SK-N-SH (cell line): ENCODE measurements at regions of chr10 and their contacts with region 1.

Region 1: DNA sequence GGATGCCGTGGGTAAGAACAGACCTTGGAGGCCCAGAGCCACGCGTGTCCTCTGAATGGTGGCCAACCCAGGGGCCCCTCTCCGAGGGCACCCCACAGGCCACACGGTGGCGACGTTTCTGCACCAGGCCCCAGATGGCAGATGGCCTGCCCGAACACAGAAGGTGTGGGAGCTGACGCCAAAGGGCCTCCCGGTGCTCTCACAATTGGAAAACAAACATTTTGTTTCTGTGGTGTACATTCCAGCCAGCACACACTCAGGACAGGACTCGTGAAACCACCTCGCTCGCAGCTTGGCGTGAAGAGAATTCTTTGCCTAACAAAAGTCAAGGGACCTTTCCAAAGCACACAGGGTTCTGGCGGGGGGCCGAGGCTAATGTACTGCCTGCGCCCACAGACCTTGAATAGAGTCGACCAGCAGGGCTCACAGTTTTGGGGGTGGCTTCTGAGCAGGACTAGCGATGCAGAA is 112.1 kb downstream of the FAM53B start:
- DNase-seq: peak; percentile 58
- H3K4me3 ChIP-seq: no peak overlapping the region
- H3K27ac ChIP-seq: no peak overlapping the region; a peak in 1 of 4 replicates
- H3K4me1 ChIP-seq: peaks cover 0 to 21% of the 10 kb centered on the region in 2 experiments; a peak in 1 of 4 replicates
- H3K27me3 ChIP-seq: no peaks in the 10 kb centered on the region
- CTCF ChIP-seq: no peak
- EP300 ChIP-seq: no peak
- RAD21 ChIP-seq: peak; percentile 45

Region 2: GRCh38 chr10:124647421-124648130 is 15.5 kb after region 1 on chr10:
- CTCF ChIA-PET with region 1: interaction called, 10 read pairs
- POLR2A ChIA-PET with region 1: no interaction called
- DNase-seq: peak; percentile 64
- H3K4me3 ChIP-seq: no peak overlapping the region
- H3K27ac ChIP-seq: peak overlapping the region in 1 of 2 experiments; percentile 97; a peak in 2 of 4 replicates
- H3K4me1 ChIP-seq: peaks cover 24 to 86% of the 10 kb centered on the region in 2 experiments
- H3K27me3 ChIP-seq: no peaks in the 10 kb centered on the region
- CTCF ChIP-seq: no peak
- EP300 ChIP-seq: no peak
- RAD21 ChIP-seq: no peak; the same call in 1 of the 2 replicates

Region 3: DNA sequence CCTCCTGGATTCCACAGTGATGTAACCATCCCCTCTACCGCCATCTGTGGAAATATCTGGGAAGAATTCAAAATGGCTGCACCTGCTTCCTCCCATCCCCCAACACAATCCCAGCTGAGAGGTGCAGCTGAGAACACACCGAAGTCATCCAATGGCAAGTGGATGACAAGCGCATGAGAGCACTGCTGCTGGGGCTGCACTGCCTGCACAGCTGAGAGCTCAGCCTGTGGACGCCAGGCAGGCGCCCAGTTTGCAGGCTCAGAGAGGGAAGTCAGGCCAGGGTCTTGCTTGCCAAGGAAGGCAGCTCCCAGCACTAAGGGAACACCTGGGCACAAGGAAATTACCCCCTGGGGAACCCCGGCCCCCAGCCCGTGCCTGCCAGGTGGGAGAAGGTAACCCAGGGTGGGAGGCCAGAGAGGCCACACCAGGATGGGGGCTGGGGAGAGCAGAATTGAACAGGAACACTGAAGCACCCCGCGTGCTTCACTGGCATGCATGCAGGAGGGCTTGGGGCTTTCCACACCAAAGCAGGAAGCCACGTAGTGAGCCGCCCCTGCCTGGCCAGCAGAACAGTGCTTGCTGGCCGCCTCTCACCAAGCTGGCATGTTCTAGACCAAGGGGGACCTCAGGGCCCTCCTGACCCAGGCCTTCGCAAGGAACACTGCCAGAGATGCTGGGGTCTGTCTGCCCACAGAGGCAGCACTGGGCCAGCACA is 65.9 kb after region 1 on chr10:
- CTCF ChIA-PET with region 1: no interaction called
- POLR2A ChIA-PET with region 1: no interaction called
- DNase-seq: no peak
- H3K4me3 ChIP-seq: no peak overlapping the region
- H3K27ac ChIP-seq: no peak overlapping the region; a peak in 1 of 4 replicates
- H3K4me1 ChIP-seq: peaks cover 0 to 41% of the 10 kb centered on the region in 2 experiments; a peak in 1 of 4 replicates
- H3K27me3 ChIP-seq: no peaks in the 10 kb centered on the region
- CTCF ChIP-seq: no peak
- EP300 ChIP-seq: no peak
- RAD21 ChIP-seq: no peak